Mammary epithelial cell (primary cell): ENCODE measurements at regions of chrX and their contacts with region 1.

Region 1: GRCh38 chrX:108138814-108139702 is 47.5 kb downstream of the ATG4A start:
- DNase-seq: no peak
- H3K4me3 ChIP-seq: no peak overlapping the region
- H3K27ac ChIP-seq: no peak overlapping the region
- H3K4me1 ChIP-seq: no peaks in the 10 kb centered on the region
- H3K27me3 ChIP-seq: no peaks in the 10 kb centered on the region
- CTCF ChIP-seq: peak; percentile 63 to 66

Region 2: DNA sequence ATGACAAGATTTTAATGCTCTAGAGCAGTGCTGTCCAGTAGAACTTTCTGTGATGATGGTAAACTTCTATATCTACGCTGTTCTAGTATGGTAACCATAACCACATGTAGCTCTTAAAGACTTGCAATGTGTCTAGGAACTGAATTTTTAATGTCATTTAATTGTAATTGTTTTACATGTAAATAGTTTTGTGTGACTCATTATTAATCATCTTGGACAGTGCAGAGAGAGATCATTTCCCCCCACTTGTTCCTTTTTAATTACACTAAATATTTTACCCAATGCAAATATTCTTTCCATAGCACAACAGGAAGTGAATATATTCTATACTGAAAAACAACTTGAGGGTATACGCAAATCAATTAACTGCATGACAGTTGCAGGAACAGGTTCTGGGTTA is 41.7 kb before region 1 on chrX:
- CTCF ChIA-PET with region 1: no interaction called
- dilution Hi-C with region 1: loop called (anchors 5 kb)
- in situ Hi-C with region 1: no loop called
- intact Hi-C with region 1: no loop called
- DNase-seq: no peak
- H3K4me3 ChIP-seq: no peak overlapping the region
- H3K27ac ChIP-seq: no peak overlapping the region
- H3K4me1 ChIP-seq: peaks cover 10% of the 10 kb centered on the region
- H3K27me3 ChIP-seq: peaks cover 4% of the 10 kb centered on the region
- CTCF ChIP-seq: no peak